Right lobe of liver (tissue), 6 donors: ENCODE measurements at regions of chr15 and their contacts with region 1.

Region 1: DNA sequence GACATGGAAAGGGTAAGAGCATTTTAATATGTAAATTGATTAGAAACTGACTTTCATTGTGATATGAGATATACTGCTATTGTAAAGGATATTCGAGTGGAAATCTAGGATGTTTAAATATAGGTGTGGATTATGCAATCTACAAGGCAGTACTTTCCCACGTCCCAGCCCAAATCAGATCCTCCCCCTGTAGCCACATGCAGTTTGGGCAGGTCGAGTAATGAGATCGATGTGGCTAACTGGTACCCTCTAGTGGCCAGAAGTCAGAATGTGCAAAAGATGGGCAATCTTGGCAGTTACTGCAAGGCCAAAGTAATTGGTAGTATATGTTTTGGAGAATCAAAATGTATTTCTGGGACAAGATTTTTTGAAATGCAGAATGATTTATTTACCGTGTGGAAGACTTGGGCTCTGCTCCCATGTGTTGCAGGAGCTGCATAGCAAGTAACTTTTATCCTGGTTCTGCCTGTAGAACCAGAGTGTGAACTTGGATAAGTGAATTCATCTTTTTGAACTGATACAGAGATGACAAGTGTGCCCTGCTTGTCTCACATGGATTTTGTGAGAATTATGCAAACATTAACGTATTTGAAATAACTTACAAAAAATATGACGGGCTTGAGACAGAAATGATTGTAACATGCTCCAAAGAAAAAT is 94.5 kb upstream of the ADAMTSL3 start:
- DNase-seq: peak in 1 of 3 donors; percentile 58
- ATAC-seq: peak; percentile 93 to 98 (median 94)
- H3K4me3 ChIP-seq: no peak overlapping the region
- H3K27ac ChIP-seq: no peak overlapping the region
- H3K4me1 ChIP-seq: no peaks in the 10 kb centered on the region
- H3K27me3 ChIP-seq: no peaks in the 10 kb centered on the region
- CTCF ChIP-seq: peak; percentile 76 to 81 (median 79)
- POLR2A ChIP-seq: no peak

Region 2: DNA sequence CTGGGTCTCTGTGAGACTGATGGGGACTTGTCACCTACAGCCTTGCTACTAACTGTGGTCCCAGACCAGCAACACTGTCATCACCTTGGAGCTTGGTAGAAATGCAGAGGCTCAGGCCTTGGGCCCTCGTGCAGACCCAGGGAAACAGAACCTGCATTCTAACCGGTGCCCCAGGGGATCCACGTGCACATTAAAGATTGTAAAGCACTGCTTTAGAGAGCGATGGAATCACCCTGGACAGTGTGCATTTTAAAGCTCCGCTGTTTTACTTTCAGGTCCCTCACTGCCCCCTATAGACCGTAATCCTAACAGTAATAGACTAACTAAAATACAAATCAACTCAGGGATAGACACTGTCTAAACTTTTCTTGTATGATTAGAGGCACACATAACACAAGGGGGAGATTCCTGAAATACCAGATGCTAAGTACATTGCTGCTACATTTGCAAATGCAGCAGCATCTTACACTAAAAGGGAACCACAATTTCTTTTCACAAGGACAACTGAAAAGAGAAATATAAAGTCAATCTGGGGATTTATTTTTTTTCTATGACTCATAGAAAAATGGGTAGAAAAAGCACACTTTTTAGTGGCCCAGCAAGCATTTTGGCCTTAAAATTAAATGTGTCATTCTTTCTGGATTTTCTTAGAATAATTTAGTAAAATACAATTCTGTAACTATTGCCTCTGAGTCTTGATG is 122.8 kb before region 1 on chr15:
- intact Hi-C with region 1: loop called in 1 of 2 experiments (anchors 10 kb)
- DNase-seq: no peak
- ATAC-seq: peak in 1 of 4 donors; percentile 22
- H3K4me3 ChIP-seq: no peak overlapping the region
- H3K27ac ChIP-seq: no peak overlapping the region
- H3K4me1 ChIP-seq: no peaks in the 10 kb centered on the region
- H3K27me3 ChIP-seq: no peaks in the 10 kb centered on the region
- CTCF ChIP-seq: peak; percentile 10 to 31 (median 24)
- POLR2A ChIP-seq: no peak